Mammary epithelial cell (primary cell): ENCODE measurements at regions of chr18 and their contacts with region 1.

Region 1: GRCh38 chr18:2417861-2418610 is 153.3 kb downstream of the METTL4 start:
- DNase-seq: peak; percentile 70
- H3K4me3 ChIP-seq: no peak overlapping the region
- H3K27ac ChIP-seq: no peak overlapping the region
- H3K4me1 ChIP-seq: peaks cover 9% of the 10 kb centered on the region
- H3K27me3 ChIP-seq: no peaks in the 10 kb centered on the region
- CTCF ChIP-seq: no peak

Region 2: DNA sequence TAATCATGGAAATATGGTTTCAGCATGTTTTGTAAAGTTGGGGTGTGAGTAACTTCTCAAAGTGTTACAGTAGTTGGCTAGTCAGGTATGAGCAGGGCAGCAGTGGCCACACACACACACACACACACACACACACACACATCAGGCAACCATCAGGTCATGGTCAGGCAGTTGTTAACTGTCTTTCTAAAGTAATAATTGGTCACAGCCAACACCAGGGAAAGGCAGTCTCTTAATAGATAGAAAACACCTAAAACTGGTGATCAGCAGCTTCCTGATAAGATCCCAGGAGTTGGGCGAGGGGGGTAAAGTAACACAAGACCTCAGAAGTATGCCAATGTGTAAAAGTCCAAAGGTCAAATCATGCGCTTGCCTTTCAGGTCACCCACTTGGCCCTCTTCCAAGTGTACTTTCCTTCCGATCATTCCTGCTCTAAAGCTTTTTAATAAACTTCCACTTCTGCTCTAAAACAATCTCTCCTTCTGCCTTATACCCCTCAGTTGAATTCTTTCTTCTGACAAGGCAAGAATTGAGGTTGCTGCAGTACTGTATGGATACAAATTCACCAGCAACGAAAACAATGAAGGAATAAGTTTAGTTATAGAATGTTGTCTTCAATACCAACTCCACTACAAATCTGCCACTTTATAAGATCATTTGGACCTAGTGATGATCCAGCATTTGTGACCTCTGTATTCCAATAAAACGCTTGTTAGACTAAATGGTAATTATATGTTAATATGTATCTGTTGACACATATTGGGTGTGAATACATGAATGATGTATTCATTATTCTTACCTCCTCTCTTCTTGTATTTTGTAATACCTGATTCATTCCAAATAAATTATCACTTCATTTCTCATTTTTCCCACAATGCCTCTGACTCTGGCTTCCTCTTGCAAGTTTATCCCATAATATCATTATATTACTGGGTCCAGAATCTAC is 101.0 kb before region 1 on chr18:
- CTCF ChIA-PET with region 1: no interaction called
- dilution Hi-C with region 1: loop called (anchors 5 kb)
- in situ Hi-C with region 1: no loop called
- intact Hi-C with region 1: no loop called
- DNase-seq: no peak
- H3K4me3 ChIP-seq: no peak overlapping the region
- H3K27ac ChIP-seq: no peak overlapping the region
- H3K4me1 ChIP-seq: no peaks in the 10 kb centered on the region
- H3K27me3 ChIP-seq: no peaks in the 10 kb centered on the region
- CTCF ChIP-seq: no peak

Region 3: DNA sequence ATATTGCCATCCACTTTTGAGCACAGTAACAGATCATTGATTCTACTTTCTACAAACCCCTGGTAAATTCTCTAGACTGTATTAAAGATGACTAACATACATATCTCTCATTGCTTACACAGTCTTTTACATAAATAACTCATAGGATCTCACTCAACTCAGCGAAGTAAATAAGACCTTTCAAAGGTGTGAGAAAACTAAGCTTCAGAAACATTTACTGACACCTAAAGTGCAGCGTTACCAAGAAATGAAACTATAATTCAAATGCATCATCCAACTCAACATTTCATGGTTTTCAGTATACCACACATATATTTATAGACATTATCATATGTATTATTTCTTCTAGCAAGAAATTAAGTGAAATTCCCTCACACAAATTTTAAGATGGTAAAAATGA is 36.5 kb before region 1 on chr18:
- CTCF ChIA-PET with region 1: no interaction called
- dilution Hi-C with region 1: loop called (anchors 5 kb)
- in situ Hi-C with region 1: no loop called
- intact Hi-C with region 1: no loop called
- DNase-seq: no peak
- H3K4me3 ChIP-seq: no peak overlapping the region
- H3K27ac ChIP-seq: no peak overlapping the region
- H3K4me1 ChIP-seq: no peaks in the 10 kb centered on the region
- H3K27me3 ChIP-seq: no peaks in the 10 kb centered on the region
- CTCF ChIP-seq: no peak